HepG2 (cell line): ENCODE measurements at regions of chr16 and their contacts with region 1.

Region 1: GRCh38 chr16:52456368-52456767 is 90.6 kb downstream of the TOX3 start:
- DNase-seq: peak; percentile 95
- ATAC-seq: peak; percentile 92
- H3K4me3 ChIP-seq: no peak overlapping the region; a peak in 1 of 6 replicates
- H3K27ac ChIP-seq: peak overlapping the region; percentile 73
- H3K4me1 ChIP-seq: peaks cover 64% of the 10 kb centered on the region
- H3K27me3 ChIP-seq: no peaks in the 10 kb centered on the region
- CTCF ChIP-seq: no peak
- EP300 ChIP-seq: peak in 1 of 2 experiments; percentile 77; a peak in 1 of 4 replicates
- POLR2A ChIP-seq: no peak
- RAD21 ChIP-seq: no peak

Region 2: DNA sequence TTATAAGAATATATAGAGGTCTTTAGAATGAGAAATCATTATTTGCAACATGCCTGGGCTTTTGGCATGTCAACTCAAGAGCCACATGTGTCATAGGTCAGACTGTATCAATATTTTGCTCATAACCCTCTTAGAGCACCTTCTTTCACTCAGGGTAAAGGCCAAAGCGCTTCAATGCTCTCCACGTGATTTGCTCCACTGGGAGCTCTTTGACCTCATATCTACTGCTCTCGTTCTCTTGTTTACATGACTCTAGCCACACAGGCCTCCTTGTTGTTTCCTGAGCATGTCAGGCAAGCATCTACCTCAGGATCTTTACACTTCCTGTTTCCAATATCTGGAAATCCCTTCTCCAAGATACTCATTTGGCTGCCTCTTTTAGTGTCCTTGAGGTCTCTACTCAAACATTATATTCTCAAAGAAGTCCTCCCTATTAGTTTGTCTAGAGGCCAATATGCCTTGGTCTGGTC is 57.8 kb before region 1 on chr16:
- CTCF ChIA-PET with region 1: no interaction called
- POLR2A ChIA-PET with region 1: no interaction called
- in situ Hi-C with region 1: no loop called
- intact Hi-C with region 1: loop called (anchors 2 kb)
- DNase-seq: peak; percentile 99
- ATAC-seq: peak; percentile 100
- H3K4me3 ChIP-seq: no peak overlapping the region
- H3K27ac ChIP-seq: peak overlapping the region; percentile 66
- H3K4me1 ChIP-seq: peaks cover 28% of the 10 kb centered on the region
- H3K27me3 ChIP-seq: no peaks in the 10 kb centered on the region
- CTCF ChIP-seq: no peak
- EP300 ChIP-seq: peak; percentile 79 to 97; a peak in 3 of 4 replicates
- POLR2A ChIP-seq: no peak
- RAD21 ChIP-seq: no peak